GM12878 (cell line): ENCODE measurements at regions of chr19 and their contacts with region 1.

Region 1: GRCh38 chr19:8412783-8413628 is at the start of gene MARCHF2:
- DNase-seq: peak; percentile 73
- ATAC-seq: peak; percentile 100
- H3K4me3 ChIP-seq: peak within 1 kb of the TSS; percentile 77
- H3K27ac ChIP-seq: no peak within 1 kb of the TSS; the same call in 1 of the 2 replicates
- H3K4me1 ChIP-seq: peaks cover 4% of the 10 kb centered on the region; the same call in 1 of the 2 replicates
- H3K27me3 ChIP-seq: no peaks in the 10 kb centered on the region
- CTCF ChIP-seq: peak; percentile 40 to 70 (median 66)
- EP300 ChIP-seq: no peak
- POLR2A ChIP-seq: peak; percentile 66
- RAD21 ChIP-seq: peak; percentile 60
- polyA plus RNA-seq, gene MARCHF2: 1.6 to 2.8 TPM

Region 2: DNA sequence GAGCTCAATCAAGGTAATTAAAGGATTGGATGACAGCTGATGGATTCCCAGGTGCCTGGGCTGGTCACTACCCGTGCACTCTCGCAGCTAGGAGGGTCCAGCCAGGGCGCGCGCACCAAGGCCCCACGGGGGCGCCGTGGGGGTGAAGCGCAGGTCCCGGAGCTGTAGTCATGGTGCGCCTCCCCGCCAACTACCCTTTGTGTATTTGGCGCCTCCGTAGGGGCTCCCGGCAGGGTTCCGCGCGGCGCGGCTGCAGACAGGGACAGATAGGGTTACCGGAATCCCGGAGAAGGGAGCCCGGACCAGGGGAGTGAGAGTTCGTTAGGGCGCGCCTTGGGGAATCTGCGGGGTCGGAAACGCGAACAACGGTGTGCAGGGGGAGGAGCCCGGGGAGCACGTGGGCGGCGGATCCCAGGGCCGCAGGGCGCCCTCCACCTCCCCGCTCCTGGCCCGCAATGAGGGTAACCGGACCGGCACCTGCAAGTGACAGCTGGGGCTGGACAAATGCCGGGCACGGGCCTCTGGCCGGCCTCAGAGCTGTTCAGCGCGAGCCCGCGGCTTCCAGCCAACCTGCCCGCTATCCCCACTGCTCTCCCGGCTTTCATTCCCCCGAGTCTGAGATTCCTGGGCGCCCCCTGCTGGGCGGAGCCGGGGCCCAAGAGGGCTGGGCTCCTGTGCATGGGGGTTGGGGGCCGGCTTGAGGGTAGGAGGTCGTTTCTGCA is 92.8 kb after region 1 on chr19:
- CTCF ChIA-PET with region 1: interaction called, 29 read pairs
- POLR2A ChIA-PET with region 1: no interaction called
- RAD21 ChIA-PET with region 1: interaction called, 16 read pairs
- SMC1A ChIA-PET with region 1: interaction called, 4 read pairs
- in situ Hi-C with region 1: no loop called
- intact Hi-C with region 1: loop called (anchors 2 kb)
- DNase-seq: no peak
- ATAC-seq: peak; percentile 83
- H3K4me3 ChIP-seq: peak overlapping the region; percentile 69
- H3K27ac ChIP-seq: peak overlapping the region; percentile 33; the same call in 1 of the 2 replicates
- H3K4me1 ChIP-seq: peaks cover 4% of the 10 kb centered on the region; the same call in 1 of the 2 replicates
- H3K27me3 ChIP-seq: no peaks in the 10 kb centered on the region
- CTCF ChIP-seq: peak; percentile 76 to 87 (median 77)
- EP300 ChIP-seq: no peak
- POLR2A ChIP-seq: peak; percentile 65
- RAD21 ChIP-seq: peak; percentile 71

Region 3: GRCh38 chr19:8513687-8514504 is 100.9 kb after region 1 on chr19 and contains the start of gene ZNF414:
- CTCF ChIA-PET with region 1: interaction called, 7 read pairs
- POLR2A ChIA-PET with region 1: interaction called, 4 read pairs
- RAD21 ChIA-PET with region 1: interaction called, 17 read pairs
- SMC1A ChIA-PET with region 1: interaction called, 3 read pairs
- in situ Hi-C with region 1: no loop called
- intact Hi-C with region 1: no loop called
- DNase-seq: peak; percentile 60
- ATAC-seq: peak; percentile 98
- H3K4me3 ChIP-seq: peak within 1 kb of the TSS; percentile 67
- H3K27ac ChIP-seq: peak within 1 kb of the TSS; percentile 97
- H3K4me1 ChIP-seq: peaks cover 11% of the 10 kb centered on the region; the same call in 1 of the 2 replicates
- H3K27me3 ChIP-seq: no peaks in the 10 kb centered on the region
- CTCF ChIP-seq: no peak
- EP300 ChIP-seq: no peak
- POLR2A ChIP-seq: peak; percentile 98
- RAD21 ChIP-seq: no peak
- polyA plus RNA-seq, gene ZNF414: 0.16 TPM in 1 of 2 experiments, not detected in the other